Motor neuron (in vitro differentiated cells): ENCODE measurements at regions of chr9 and their contacts with region 1.

Region 1: DNA sequence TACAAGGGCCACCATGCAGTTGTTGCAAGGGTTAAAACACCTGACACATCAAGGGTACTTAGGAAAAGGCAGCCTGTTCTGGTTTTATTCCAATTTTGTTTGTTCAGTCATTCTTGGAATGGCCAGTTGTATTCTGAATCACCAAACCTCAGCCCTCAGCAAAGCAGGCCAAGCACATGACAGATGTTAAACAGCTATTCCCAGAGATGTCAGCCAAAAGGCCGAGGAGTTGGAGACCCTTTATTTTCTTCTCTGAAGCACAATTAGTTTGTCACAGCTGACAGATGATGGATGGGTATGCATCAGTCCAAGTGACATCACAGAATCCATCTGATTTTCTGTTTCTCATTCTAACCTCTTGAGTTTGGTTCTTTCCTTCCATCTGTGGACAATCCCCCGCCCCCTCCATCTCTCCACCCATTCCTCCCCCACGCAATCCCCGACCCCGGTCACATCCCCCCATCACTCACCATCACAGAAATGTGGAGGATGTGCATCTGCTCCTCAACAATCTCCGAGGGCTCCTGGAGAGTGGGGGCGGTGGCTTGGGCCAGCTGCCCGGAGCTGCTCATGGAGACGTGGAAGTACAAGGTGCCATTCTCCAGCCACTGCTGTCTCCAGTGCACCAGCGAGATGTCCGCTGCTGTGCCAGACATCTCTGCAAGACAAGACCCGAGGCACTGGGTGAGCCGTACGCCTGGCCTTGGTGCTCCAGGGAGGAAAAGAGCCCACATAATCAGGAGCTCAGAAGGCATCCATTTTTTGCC is 123.8 kb downstream of the ASTN2 start:
- ATAC-seq: peak in 1 of 8 experiments; percentile 17
- H3K4me3 ChIP-seq: no peak overlapping the region
- H3K27ac ChIP-seq: no peak overlapping the region
- H3K4me1 ChIP-seq: no peaks in the 10 kb centered on the region

Region 2: DNA sequence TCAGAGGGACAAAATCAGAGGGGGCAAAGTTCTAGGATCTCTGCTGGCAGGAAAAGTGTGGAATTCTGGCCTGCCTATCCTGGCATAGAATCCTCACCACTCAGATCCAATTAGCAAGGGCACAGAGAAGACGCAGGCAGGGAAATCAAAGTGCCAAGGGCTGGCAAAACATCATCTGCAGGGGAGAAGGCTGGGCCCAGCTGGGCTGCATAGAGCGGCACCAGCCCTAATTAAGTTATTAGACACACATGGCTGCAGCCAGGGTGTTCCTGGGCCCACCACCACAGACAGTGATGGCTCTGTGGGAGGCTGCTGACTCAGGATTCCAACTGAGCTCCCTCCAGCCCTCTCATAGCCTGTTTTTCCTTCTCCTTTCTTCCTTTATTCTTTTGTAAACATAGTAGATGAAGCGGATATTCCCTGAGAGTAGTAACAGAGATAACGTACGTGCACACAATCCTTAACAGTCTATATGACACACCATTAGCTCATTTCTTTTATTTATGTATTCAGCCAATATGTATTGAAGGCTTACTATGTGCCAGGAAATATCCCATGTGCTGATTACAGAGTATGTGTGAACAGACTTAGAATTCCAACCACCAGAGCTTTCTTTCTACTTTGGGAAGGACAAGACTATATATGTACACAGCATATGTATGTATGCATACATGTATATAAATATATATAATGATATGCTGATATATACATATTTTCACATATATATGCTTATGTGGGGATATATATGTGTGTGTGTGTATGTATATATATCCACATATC is 112.3 kb before region 1 on chr9:
- in situ Hi-C with region 1: loop called in 1 of 9 experiments (anchors 25 kb)
- ATAC-seq: peak in 5 of 8 experiments; percentile 14 to 65 (median 44)
- H3K4me3 ChIP-seq: no peak overlapping the region
- H3K27ac ChIP-seq: no peak overlapping the region
- H3K4me1 ChIP-seq: peaks cover 0 to 3% of the 10 kb centered on the region in 2 donors